Heart right ventricle (tissue), 16 donors: ENCODE measurements at regions of chr1 and their contacts with region 1.

Region 1: DNA sequence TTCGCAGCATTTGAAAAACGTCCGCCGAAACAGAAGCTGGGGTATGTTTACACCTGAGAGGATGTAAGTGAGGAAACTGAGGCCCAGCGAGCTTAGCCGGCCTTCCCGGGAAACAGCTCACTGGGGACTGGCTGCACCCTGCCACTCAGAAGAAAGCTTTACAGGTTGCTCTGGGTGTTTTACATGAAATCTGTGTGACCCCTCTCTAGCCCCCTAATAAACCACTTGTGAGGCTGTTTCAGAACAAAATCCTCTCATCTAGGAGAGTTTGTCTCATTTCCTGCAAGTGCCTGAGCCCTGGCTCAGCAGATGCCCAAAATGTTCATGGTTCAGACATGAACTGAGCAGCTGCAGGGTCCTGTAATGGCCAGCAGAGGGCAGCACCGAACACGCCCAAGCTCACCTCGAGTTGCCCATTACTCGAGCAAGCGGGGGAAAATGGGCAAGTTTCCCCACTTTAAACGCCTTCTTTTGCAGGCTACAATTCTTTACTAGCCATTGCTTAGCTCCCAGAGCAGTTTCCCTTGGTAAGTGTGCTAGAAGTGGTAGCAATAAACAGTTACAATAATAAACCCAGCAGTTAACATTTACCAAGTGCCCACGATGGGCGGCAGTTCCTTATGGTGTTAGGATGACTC is 76.4 kb downstream of the FHAD1 start:
- DNase-seq: peak; percentile 67 to 77
- ATAC-seq: peak; percentile 77 to 91 (median 88)
- H3K4me3 ChIP-seq: no peak overlapping the region
- H3K27ac ChIP-seq: peak overlapping the region in 5 of 10 donors; percentile 13 to 38 (median 29)
- H3K4me1 ChIP-seq: peaks cover 0 to 24% (median 13%) of the 10 kb centered on the region in 9 donors
- H3K27me3 ChIP-seq: peaks cover 0 to under 1% (median 0%) of the 10 kb centered on the region in 7 donors
- CTCF ChIP-seq: peak; percentile 96 to 100 (median 98)

Region 2: GRCh38 chr1:15370781-15371520 is 47.5 kb after region 1 on chr1:
- intact Hi-C with region 1: no loop called
- DNase-seq: peak; percentile 56 to 60
- ATAC-seq: peak; percentile 66 to 93 (median 84)
- H3K4me3 ChIP-seq: no peak overlapping the region
- H3K27ac ChIP-seq: peak overlapping the region in 6 of 10 donors; percentile 5 to 76 (median 52)
- H3K4me1 ChIP-seq: peaks cover 0 to 19% (median 11%) of the 10 kb centered on the region in 9 donors
- H3K27me3 ChIP-seq: no peaks in the 10 kb centered on the region
- CTCF ChIP-seq: no peak

Region 3: DNA sequence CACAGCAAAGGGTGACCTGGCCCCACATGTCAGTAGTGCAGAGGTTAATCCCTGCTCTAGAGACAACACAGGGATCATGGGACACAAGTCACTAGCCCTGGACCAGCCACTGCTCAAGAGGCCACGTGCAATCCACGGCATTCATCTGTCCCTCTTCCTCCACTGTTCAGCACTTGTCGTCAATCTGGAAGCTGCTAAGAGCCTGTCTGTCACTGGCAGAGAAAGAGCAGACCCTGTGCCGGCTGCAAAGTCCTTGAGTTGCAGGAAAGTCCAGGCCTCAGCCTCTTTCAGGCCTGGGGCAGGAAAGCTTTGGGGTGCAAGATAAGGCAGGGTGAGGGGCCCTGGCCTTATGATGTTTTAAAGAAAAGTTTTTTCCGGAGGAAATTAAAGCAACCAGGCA is 169.1 kb after region 1 on chr1:
- intact Hi-C with region 1: loop called in 1 of 10 experiments (anchors 10 kb)
- DNase-seq: peak; percentile 32 to 74
- ATAC-seq: peak; percentile 86 to 95 (median 91)
- H3K4me3 ChIP-seq: no peak overlapping the region
- H3K27ac ChIP-seq: peak overlapping the region in 9 of 10 donors; percentile 20 to 73 (median 46)
- H3K4me1 ChIP-seq: peaks cover 0 to 27% (median 6%) of the 10 kb centered on the region in 9 donors
- H3K27me3 ChIP-seq: no peaks in the 10 kb centered on the region
- CTCF ChIP-seq: no peak

Region 4: GRCh38 chr1:15501208-15502032 is 177.9 kb after region 1 on chr1:
- intact Hi-C with region 1: loop called in 5 of 10 experiments (anchors 5 to 10 kb)
- DNase-seq: peak; percentile 50 to 57
- ATAC-seq: peak in 4 of 8 donors; percentile 50 to 78 (median 64)
- H3K4me3 ChIP-seq: no peak overlapping the region
- H3K27ac ChIP-seq: no peak overlapping the region
- H3K4me1 ChIP-seq: peaks cover 0 to under 1% (median 0%) of the 10 kb centered on the region in 9 donors
- H3K27me3 ChIP-seq: no peaks in the 10 kb centered on the region
- CTCF ChIP-seq: peak; percentile 26 to 77 (median 64)